Colonic mucosa (tissue), 4 donors: ENCODE measurements at regions of chr11 and their contacts with region 1.

Region 1: GRCh38 chr11:103326070-103326794 is 217.0 kb downstream of the DYNC2H1 start:
- DNase-seq: peak; percentile 32
- H3K4me3 ChIP-seq: no peak overlapping the region
- H3K27ac ChIP-seq: no peak overlapping the region
- H3K4me1 ChIP-seq: no peaks in the 10 kb centered on the region
- H3K27me3 ChIP-seq: no peaks in the 10 kb centered on the region
- CTCF ChIP-seq: peak; percentile 43

Region 2: GRCh38 chr11:103601225-103601846 is 275.1 kb after region 1 on chr11:
- intact Hi-C with region 1: loop called (anchors 5 kb)
- DNase-seq: peak; percentile 20
- H3K4me3 ChIP-seq: no peak overlapping the region
- H3K27ac ChIP-seq: no peak overlapping the region
- H3K4me1 ChIP-seq: no peaks in the 10 kb centered on the region
- H3K27me3 ChIP-seq: no peaks in the 10 kb centered on the region
- CTCF ChIP-seq: peak; percentile 67